IMR-90 (cell line): ENCODE measurements at regions of chr10 and their contacts with region 1.

Region 1: DNA sequence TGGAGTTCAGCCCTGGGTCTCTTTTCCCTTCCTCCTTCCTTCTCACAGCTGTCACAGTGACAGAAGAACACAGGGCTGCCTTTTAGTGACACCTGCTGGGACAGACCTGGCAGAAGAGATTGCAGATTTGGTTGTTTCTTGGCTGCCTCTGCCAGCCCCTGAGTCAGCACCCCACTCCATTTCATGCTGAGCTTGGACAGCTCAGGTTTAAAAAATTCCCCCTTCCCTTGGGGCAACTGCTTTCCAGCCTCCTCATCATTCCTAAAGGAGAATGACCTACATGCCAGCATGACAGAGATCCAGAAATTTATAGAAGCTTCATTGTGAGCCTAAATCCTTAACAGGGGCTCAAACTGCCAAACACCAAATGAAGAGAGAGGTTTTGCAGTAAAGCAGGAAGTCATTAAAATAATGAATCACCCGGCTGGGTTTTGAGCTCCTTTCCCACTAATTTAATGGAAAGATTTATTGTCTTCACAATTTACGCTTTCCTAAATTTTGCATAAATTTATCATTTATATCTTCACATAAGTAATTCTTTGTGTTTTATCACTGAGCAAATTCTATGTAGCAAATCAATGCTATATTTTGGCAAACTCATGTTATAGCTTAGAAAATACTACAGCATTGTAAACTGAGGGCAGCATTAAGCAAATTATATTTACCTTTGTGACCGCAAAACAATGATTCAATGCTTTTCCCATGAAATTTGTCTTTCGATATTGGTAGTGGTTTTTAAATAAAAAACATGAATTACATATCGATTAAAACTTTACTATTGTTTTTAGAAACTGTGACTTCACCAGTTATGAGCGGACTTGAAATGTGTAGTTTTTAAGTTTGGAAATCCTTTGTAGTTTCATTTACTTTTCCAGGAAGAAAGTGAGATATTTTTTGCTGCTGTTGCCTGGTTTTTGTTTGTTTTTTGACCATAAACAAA is 399.5 kb upstream of the ANKRD30A start:
- DNase-seq: peak; percentile 88
- ATAC-seq: peak; percentile 86
- H3K4me3 ChIP-seq: no peak overlapping the region
- H3K27ac ChIP-seq: no peak overlapping the region
- H3K4me1 ChIP-seq: peaks cover 3% of the 10 kb centered on the region
- H3K27me3 ChIP-seq: no peaks in the 10 kb centered on the region
- CTCF ChIP-seq: peak; percentile 54
- POLR2A ChIP-seq: no peak
- RAD21 ChIP-seq: peak; percentile 84

Region 2: DNA sequence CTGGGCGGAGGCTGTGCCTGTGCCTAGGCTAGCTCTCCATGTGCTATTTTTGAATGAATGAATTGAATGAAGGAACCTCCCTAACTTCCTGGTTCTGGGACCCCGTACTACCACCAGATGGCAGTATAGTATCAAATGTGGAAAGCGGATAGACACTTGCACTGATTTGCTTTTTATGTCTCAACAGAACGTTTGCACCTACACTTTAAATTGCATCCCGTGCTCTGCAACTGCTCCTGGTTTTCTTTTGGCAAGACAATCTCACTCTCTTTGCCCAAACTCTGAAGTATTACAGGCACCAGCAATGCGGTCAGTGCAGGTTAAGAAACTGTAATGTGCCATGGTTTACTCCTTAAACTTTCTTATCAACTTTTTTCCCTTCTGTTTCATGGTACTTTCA is 1090.3 kb before region 1 on chr10:
- CTCF ChIA-PET with region 1: interaction called, 3 read pairs
- POLR2A ChIA-PET with region 1: no interaction called
- dilution Hi-C with region 1: no loop called
- in situ Hi-C with region 1: no loop called
- intact Hi-C with region 1: loop called (anchors 2 kb)
- DNase-seq: peak; percentile 74
- ATAC-seq: peak; percentile 48; the same call in 1 of the 2 replicates
- H3K4me3 ChIP-seq: no peak overlapping the region
- H3K27ac ChIP-seq: no peak overlapping the region
- H3K4me1 ChIP-seq: peaks cover 5% of the 10 kb centered on the region; the same call in 1 of the 2 replicates
- H3K27me3 ChIP-seq: no peaks in the 10 kb centered on the region
- CTCF ChIP-seq: peak; percentile 96
- POLR2A ChIP-seq: peak; percentile 67; the same call in 1 of the 2 replicates
- RAD21 ChIP-seq: peak; percentile 96

Region 3: GRCh38 chr10:36050763-36051499 is 674.9 kb before region 1 on chr10:
- CTCF ChIA-PET with region 1: interaction called, 11 read pairs
- POLR2A ChIA-PET with region 1: no interaction called
- dilution Hi-C with region 1: no loop called
- in situ Hi-C with region 1: no loop called
- intact Hi-C with region 1: no loop called
- DNase-seq: peak; percentile 26
- ATAC-seq: 0 out of 2 replicates have a peak, but pooled peaks have one; percentile 27
- H3K4me3 ChIP-seq: no peak overlapping the region
- H3K27ac ChIP-seq: no peak overlapping the region
- H3K4me1 ChIP-seq: no peaks in the 10 kb centered on the region
- H3K27me3 ChIP-seq: no peaks in the 10 kb centered on the region; the same call in 1 of the 2 replicates
- CTCF ChIP-seq: no peak
- POLR2A ChIP-seq: no peak
- RAD21 ChIP-seq: no peak

Region 4: DNA sequence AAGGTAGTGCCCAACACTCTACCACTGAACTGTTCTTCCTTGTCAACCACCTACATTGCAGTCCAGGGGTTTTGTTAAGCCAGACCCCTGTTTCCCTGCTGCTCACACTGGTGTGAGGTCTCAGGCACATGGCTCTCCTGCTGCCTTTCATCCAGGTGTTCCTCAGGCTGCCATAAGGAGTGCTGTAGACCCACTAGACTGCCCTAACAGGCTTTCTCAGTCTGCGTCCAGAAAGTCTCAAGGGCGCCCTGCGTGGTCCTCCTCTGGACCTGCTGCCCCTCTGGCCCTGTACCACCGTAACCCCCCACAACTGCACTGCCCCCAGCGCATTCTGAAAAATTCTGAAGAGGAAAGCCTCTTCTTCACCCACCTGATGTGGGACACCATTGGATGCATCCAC is 173.8 kb after region 1 on chr10:
- CTCF ChIA-PET with region 1: no interaction called
- POLR2A ChIA-PET with region 1: no interaction called
- dilution Hi-C with region 1: no loop called
- in situ Hi-C with region 1: no loop called
- intact Hi-C with region 1: no loop called
- DNase-seq: no peak
- ATAC-seq: no peak
- H3K4me3 ChIP-seq: no peak overlapping the region
- H3K27ac ChIP-seq: no peak overlapping the region
- H3K4me1 ChIP-seq: no peaks in the 10 kb centered on the region
- H3K27me3 ChIP-seq: no peaks in the 10 kb centered on the region
- CTCF ChIP-seq: no peak
- POLR2A ChIP-seq: no peak
- RAD21 ChIP-seq: no peak

Region 5: GRCh38 chr10:37035853-37036252 is 310.0 kb after region 1 on chr10:
- CTCF ChIA-PET with region 1: no interaction called
- POLR2A ChIA-PET with region 1: no interaction called
- dilution Hi-C with region 1: no loop called
- in situ Hi-C with region 1: no loop called
- intact Hi-C with region 1: no loop called
- DNase-seq: no peak
- ATAC-seq: no peak
- H3K4me3 ChIP-seq: no peak overlapping the region
- H3K27ac ChIP-seq: no peak overlapping the region
- H3K4me1 ChIP-seq: no peaks in the 10 kb centered on the region
- H3K27me3 ChIP-seq: no peaks in the 10 kb centered on the region
- CTCF ChIP-seq: no peak
- POLR2A ChIP-seq: no peak
- RAD21 ChIP-seq: no peak